ENCODE measurements at regions of chr19 and their contacts with region 1.

Region 1: DNA sequence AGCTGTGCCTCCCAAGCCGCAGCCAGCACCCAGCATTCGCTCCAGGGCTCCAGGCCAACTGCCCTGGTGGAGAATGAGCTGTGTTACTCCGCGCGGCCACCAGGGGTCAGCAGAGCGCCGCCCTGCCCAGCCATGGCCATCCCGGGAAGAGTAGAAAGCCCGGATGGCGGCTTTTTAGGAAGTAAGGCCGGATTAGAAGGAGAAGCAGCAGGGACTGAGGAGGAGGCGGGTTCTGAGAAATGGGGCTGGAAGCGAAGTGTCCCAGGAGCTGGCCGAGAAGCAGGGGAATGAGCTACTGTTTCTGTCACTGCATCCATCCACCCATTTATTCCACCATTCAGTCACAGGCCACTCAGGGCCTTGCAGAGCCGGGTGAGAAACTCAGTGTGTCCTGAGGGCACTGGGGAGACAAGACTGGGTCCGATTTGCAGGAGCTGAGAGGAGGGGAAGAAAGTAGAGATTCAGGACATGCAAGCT is 6.6 kb upstream of the NPAS1 start:
- DNase-seq: peak; percentile 92
- H3K4me3 ChIP-seq: no peak overlapping the region; a peak in 1 of 4 replicates
- H3K27ac ChIP-seq: no peak overlapping the region
- H3K4me1 ChIP-seq: peaks cover 0 to 3% of the 10 kb centered on the region in 2 experiments; a peak in 1 of 4 replicates
- H3K27me3 ChIP-seq: no peaks in the 10 kb centered on the region
- CTCF ChIP-seq: peak; percentile 95
- EP300 ChIP-seq: 0 out of 4 replicates have a peak, but pooled peaks of 1 of the 2 experiments have one; percentile 17
- RAD21 ChIP-seq: peak; percentile 93

Region 2: DNA sequence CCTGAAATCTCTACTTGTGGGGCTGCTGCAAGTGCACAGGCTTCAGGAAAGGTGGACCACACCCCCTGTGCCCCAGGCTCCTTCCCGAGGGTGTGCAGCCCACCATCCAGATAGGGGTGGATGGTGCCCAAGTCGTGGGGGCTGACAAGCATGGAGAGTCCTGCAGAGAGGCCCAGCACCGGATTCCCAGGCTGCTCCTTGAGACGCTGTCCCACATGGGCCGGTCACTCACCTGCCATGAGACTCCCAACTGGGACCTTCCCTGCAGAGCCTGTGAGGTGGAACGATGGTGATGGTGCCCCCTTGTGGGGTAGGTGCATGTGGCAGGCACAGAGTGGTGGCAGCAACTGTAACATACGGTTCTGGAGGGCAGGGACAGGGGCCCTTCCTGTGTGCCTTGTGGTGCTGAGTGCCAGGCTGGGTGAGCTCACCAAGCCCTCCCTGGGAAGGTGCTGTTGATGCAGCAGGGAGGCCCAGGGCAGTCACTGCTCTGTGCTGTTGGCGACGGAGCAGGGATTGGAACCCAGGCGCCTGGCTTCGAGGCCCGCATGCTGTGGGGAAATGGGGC is 1887.1 kb before region 1 on chr19:
- CTCF ChIA-PET with region 1: no interaction called
- POLR2A ChIA-PET with region 1: no interaction called
- DNase-seq: peak; percentile 68
- H3K4me3 ChIP-seq: no peak overlapping the region
- H3K27ac ChIP-seq: no peak overlapping the region; a peak in 1 of 4 replicates
- H3K4me1 ChIP-seq: peaks cover 0 to 23% of the 10 kb centered on the region in 2 experiments; a peak in 1 of 4 replicates
- H3K27me3 ChIP-seq: no peaks in the 10 kb centered on the region
- CTCF ChIP-seq: peak; percentile 74
- EP300 ChIP-seq: no peak
- RAD21 ChIP-seq: peak; percentile 55

Region 3: DNA sequence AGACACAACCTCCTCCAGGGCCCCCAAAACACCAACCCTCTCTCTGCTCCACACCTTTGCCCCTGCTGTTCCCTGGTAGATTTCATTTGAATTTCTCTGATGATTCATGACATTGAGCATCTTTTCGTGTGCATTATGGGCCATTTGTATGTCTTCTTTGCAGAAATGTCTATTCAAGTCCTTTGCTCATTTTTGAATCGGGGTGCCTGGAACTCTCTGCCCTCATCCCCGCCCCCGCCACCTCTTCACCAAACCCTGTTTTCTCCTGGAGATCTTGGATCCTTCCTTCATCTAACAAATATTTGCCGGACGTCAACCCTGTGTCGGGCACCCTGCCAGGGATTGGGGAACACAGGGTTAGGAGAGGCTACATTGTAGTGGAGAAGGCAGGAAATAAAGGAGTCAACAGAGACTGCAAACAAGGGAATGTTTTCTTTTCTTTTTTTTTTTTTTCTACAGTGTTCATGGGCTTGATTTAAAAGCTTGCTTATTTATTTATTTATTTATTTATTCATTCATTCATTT is 199.2 kb before region 1 on chr19:
- CTCF ChIA-PET with region 1: no interaction called
- POLR2A ChIA-PET with region 1: no interaction called
- DNase-seq: no peak
- H3K4me3 ChIP-seq: no peak overlapping the region
- H3K27ac ChIP-seq: no peak overlapping the region; a peak in 1 of 4 replicates
- H3K4me1 ChIP-seq: peaks cover 0 to 13% of the 10 kb centered on the region in 2 experiments; a peak in 1 of 4 replicates
- H3K27me3 ChIP-seq: no peaks in the 10 kb centered on the region
- CTCF ChIP-seq: no peak
- EP300 ChIP-seq: no peak; a peak in 1 of 4 replicates
- RAD21 ChIP-seq: no peak

Region 4: DNA sequence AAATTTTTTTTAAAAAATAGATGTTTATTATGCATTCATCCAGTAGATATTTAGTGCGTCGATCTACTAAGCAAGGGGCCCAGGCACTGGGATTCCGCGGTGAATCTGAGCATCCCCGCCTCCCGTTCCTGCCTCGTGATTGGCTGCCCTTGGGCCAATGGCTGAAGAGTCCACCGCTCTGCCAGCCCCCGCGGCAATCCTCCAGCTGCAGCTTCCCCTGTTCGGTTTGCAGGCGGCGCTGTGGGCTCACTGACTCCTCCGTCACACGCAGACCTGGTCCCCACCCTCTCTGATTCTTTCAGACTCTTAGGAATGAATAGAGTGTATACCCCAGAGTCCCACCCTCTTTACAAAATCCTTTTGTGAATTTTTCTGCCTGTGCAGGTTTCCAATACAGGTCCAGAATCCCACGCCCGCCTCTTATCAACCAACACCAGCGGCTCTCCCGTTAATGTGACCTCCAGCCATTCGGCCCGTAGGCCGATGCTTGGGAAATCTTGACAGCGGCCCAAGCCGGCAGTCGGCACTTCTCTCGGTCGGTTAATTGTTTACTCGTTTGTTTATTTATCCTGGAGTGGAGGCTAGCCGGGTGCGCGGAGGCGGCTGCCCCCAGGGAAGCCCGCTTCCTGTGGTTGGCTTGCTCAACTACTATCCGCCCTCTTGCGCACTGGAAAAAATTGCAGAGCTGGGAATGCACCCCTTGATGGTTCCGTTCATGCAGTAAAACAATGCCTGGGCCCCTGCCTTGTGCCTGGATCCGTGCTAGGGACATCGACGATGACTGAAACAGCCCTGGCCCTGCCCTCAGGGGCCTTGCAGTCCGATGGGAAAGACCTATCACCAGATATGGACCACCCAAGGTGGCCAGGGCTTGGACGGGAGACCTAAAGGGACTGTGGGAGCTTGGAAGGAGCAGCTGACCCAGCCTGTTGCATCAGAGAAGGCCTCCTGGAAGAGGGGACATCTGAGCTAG is 156.7 kb before region 1 on chr19:
- CTCF ChIA-PET with region 1: interaction called, 21 read pairs
- POLR2A ChIA-PET with region 1: no interaction called
- DNase-seq: peak; percentile 88
- H3K4me3 ChIP-seq: peak overlapping the region in 1 of 2 experiments; percentile 31; a peak in 2 of 4 replicates
- H3K27ac ChIP-seq: peak overlapping the region; percentile 4 to 21; a peak in 2 of 4 replicates
- H3K4me1 ChIP-seq: peaks cover 0 to 5% of the 10 kb centered on the region in 2 experiments; a peak in 2 of 4 replicates
- H3K27me3 ChIP-seq: no peaks in the 10 kb centered on the region
- CTCF ChIP-seq: peak; percentile 85
- EP300 ChIP-seq: no peak
- RAD21 ChIP-seq: peak; percentile 93

Region 5: DNA sequence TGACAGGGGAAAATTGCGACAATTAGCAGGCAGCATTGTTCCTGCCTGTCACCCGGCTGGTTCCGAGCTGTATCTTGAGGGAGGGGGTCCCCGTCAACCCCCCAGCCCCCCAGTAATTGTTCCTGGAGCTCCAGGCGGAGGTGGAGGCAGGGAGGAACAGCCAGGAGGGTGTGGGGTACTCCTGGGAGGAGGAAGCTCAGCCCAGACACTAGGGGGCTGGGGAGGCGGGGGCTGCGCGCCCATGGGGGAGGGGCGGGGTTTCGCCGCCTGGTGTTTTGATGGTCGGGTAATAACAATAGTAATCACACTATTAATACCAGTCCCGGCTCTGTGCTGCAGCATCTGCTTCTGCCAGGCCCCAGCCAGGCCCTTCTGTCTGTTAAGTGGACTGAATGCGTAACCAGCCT is 15.1 kb after region 1 on chr19:
- CTCF ChIA-PET with region 1: interaction called, 98 read pairs
- POLR2A ChIA-PET with region 1: interaction called, 3 read pairs
- DNase-seq: peak; percentile 78
- H3K4me3 ChIP-seq: no peak overlapping the region; a peak in 1 of 4 replicates
- H3K27ac ChIP-seq: no peak overlapping the region
- H3K4me1 ChIP-seq: peaks cover 0 to 7% of the 10 kb centered on the region in 2 experiments; a peak in 2 of 4 replicates
- H3K27me3 ChIP-seq: peaks cover 23% of the 10 kb centered on the region
- CTCF ChIP-seq: no peak
- EP300 ChIP-seq: no peak
- RAD21 ChIP-seq: no peak

Region 6: GRCh38 chr19:47086280-47086679 is 73.2 kb after region 1 on chr19:
- CTCF ChIA-PET with region 1: interaction called, 10 read pairs
- POLR2A ChIA-PET with region 1: no interaction called
- DNase-seq: no peak
- H3K4me3 ChIP-seq: no peak overlapping the region
- H3K27ac ChIP-seq: no peak overlapping the region
- H3K4me1 ChIP-seq: no peaks in the 10 kb centered on the region
- H3K27me3 ChIP-seq: no peaks in the 10 kb centered on the region
- CTCF ChIP-seq: no peak
- EP300 ChIP-seq: no peak
- RAD21 ChIP-seq: no peak

Region 7: GRCh38 chr19:47124937-47125668 is 112.0 kb after region 1 on chr19:
- CTCF ChIA-PET with region 1: interaction called, 19 read pairs
- POLR2A ChIA-PET with region 1: interaction called, 3 read pairs
- DNase-seq: peak; percentile 73
- H3K4me3 ChIP-seq: no peak overlapping the region
- H3K27ac ChIP-seq: no peak overlapping the region
- H3K4me1 ChIP-seq: peaks cover 0 to 12% of the 10 kb centered on the region in 2 experiments; a peak in 2 of 4 replicates
- H3K27me3 ChIP-seq: no peaks in the 10 kb centered on the region
- CTCF ChIP-seq: peak; percentile 74
- EP300 ChIP-seq: no peak
- RAD21 ChIP-seq: peak; percentile 94

Region 8: GRCh38 chr19:47267350-47267759 is 254.3 kb after region 1 on chr19:
- CTCF ChIA-PET with region 1: no interaction called
- POLR2A ChIA-PET with region 1: no interaction called
- DNase-seq: no peak
- H3K4me3 ChIP-seq: no peak overlapping the region
- H3K27ac ChIP-seq: no peak overlapping the region
- H3K4me1 ChIP-seq: no peaks in the 10 kb centered on the region
- H3K27me3 ChIP-seq: no peaks in the 10 kb centered on the region
- CTCF ChIP-seq: no peak
- EP300 ChIP-seq: no peak
- RAD21 ChIP-seq: no peak